Caco-2 (cell line): ENCODE measurements at regions of chr2 and their contacts with region 1.

Region 1: DNA sequence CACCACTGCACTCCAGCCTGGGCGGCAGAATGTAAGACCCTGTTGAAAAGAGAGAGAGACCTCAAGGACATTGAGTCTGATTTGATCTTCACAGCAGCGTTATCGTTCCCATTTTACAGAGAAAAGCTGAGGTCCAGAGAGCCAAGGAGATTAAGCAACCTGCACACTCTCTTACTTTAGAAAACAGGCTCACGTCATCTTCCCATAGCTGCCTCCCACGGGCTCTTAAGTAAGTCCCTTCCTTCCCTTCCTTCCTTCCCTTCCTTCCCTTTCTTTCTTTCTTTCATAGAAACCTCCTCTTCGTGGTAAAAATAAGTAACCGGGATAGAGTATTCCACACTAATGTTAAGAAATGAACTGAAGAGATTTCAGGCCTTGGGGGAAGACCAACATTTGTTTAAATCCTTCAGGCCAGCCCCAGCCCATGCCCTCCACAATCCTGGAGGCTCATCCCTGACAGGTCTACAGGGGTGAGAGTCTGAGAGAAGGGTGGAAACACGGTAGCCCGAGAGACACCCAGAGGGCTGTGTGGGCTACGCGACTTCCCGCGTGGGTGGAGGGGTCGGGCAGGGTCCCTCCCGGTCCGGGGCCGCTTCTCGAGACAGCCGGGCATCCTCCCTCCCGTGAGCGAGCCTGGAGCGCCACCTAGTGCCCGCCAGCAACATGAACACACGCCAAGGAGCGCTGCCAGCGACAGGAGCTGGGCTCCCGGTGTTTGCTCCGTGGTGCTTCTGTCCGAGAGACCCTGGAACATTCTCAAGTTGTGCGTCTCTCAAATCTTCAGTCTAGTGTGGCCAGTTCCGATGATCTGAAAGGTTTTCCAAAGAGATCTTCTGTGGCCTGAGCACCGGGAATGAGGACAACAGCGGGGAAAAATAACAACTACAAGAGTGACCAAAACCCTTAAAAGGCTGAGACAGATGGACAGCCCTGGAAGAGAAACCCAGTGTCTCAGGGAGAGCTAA is 160.3 kb downstream of the INO80D start:
- DNase-seq: peak; percentile 77 to 88
- H3K4me3 ChIP-seq: peak overlapping the region; percentile 22
- H3K4me3 Mint-ChIP-seq: peak overlapping the region; percentile 17
- H3K27ac Mint-ChIP-seq: no peak overlapping the region
- H3K4me1 ChIP-seq: peaks cover 21% of the 10 kb centered on the region
- H3K4me1 Mint-ChIP-seq: peaks cover 21% of the 10 kb centered on the region
- H3K27me3 ChIP-seq: no peaks in the 10 kb centered on the region
- H3K27me3 Mint-ChIP-seq: no peaks in the 10 kb centered on the region
- CTCF ChIP-seq: peak; percentile 95

Region 2: DNA sequence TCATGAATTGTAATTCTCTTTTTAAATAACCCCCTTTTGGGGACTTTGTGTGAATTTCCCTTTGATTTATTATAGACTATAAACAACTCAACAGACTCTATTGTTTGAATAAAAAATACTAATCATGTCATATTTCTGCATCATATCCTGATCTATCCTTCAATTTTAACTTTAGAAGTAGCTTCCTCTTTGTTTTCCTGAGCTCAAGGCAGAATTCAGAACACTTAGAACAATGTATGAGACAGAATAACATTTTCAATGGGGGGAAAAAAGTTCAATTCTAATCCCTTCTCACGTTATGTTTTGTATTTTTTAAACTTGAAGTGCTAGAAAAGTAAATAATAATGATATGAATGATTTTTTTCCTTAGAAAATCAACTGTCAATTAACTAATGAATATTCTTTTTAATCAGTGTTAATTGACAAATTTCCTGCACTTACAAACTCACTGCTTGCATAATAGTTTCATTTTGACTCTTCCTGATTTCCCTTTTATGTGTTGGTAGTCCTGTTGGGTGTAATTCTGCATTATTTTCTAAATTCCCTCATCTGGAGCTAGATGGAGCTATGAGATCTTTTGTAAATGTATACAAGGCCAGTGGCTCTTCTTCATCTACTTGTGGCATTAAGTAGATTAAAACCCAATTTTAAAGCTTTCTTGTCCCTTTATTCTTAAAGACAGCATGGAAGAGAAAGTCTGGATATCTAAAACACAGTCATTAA is 1054.3 kb before region 1 on chr2:
- CTCF ChIA-PET with region 1: no interaction called
- POLR2A ChIA-PET with region 1: no interaction called
- intact Hi-C with region 1: loop called (anchors 5 kb)
- DNase-seq: peak in 1 of 2 experiments; percentile 16
- H3K4me3 ChIP-seq: no peak overlapping the region
- H3K4me3 Mint-ChIP-seq: no peak overlapping the region
- H3K27ac Mint-ChIP-seq: no peak overlapping the region
- H3K4me1 ChIP-seq: no peaks in the 10 kb centered on the region
- H3K4me1 Mint-ChIP-seq: peaks cover 20% of the 10 kb centered on the region
- H3K27me3 ChIP-seq: no peaks in the 10 kb centered on the region
- H3K27me3 Mint-ChIP-seq: no peaks in the 10 kb centered on the region
- CTCF ChIP-seq: peak; percentile 32 to 44

Region 3: DNA sequence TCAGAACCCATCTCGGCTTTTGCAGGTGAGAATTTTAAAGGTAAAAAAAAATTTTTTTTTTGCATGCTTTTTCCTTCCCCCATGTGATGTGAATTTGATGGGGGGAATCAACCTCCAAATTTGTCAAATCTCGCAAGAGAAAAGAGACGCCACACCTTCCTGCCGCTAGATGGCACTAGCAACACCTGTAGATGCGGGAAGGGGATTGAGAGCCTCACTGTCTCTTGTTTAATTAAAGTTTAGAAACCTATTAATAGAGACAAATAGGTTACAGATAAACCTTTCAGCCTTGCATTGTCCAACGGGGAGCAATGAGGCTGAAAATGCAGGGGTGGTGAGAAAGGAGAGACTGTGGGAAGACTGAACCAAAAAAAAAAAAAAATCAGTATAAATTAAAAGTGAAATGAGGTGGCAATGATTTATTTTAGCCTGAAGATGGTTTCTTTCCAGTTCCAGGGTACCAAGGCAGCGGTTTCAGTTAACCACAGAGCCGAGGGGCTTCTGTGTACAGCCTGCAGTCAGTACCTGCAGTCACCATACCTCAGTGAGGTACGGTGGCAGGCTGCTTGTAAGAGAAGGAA is 158.8 kb before region 1 on chr2:
- CTCF ChIA-PET with region 1: interaction called, 4 read pairs
- POLR2A ChIA-PET with region 1: no interaction called
- intact Hi-C with region 1: loop called (anchors 1 kb)
- DNase-seq: peak; percentile 61 to 65
- H3K4me3 ChIP-seq: no peak overlapping the region
- H3K4me3 Mint-ChIP-seq: no peak overlapping the region
- H3K27ac Mint-ChIP-seq: peak overlapping the region; percentile 52
- H3K4me1 ChIP-seq: peaks cover 32% of the 10 kb centered on the region
- H3K4me1 Mint-ChIP-seq: peaks cover 31% of the 10 kb centered on the region
- H3K27me3 ChIP-seq: no peaks in the 10 kb centered on the region
- H3K27me3 Mint-ChIP-seq: no peaks in the 10 kb centered on the region
- CTCF ChIP-seq: peak; percentile 93 to 96

Region 4: DNA sequence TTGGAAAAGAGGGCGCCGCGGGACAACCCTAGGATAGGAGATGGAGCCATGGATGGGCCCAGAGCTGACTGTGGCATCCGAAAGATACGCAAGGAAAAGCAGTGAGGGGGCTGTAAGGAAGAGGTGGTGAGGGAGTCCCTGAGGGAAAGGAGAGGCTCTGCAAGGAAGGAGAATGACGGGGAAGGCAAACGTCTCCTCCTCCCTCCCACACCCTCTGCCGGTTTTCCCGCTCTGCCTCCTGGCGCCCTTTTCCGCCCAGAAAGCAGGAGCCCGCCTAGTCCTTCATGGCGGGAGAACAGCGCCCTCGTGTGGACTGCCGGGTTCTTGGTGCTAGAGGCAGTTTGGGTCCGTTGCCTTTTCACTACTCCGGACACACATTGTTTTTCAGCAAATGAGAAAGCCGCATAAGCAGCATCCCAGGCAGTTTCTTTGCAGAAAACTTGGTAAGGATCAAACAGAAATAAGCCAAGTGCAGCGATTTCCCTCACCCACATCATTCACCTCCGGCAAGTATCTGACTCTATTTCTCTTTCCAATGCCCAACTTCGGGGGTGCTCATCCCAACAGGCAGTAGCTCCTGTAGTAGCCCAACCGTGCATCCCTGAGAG is 40.1 kb before region 1 on chr2:
- CTCF ChIA-PET with region 1: no interaction called
- POLR2A ChIA-PET with region 1: no interaction called
- intact Hi-C with region 1: loop called (anchors 1 kb)
- DNase-seq: peak; percentile 81 to 86
- H3K4me3 ChIP-seq: no peak overlapping the region
- H3K4me3 Mint-ChIP-seq: no peak overlapping the region
- H3K27ac Mint-ChIP-seq: no peak overlapping the region
- H3K4me1 ChIP-seq: no peaks in the 10 kb centered on the region
- H3K4me1 Mint-ChIP-seq: no peaks in the 10 kb centered on the region
- H3K27me3 ChIP-seq: no peaks in the 10 kb centered on the region
- H3K27me3 Mint-ChIP-seq: peaks cover 3% of the 10 kb centered on the region
- CTCF ChIP-seq: peak; percentile 77 to 90

Region 5: GRCh38 chr2:205947621-205948495 is 22.2 kb after region 1 on chr2:
- CTCF ChIA-PET with region 1: interaction called, 21 read pairs
- POLR2A ChIA-PET with region 1: no interaction called
- intact Hi-C with region 1: loop called (anchors 1 kb)
- DNase-seq: peak; percentile 69 to 79
- H3K4me3 ChIP-seq: no peak overlapping the region
- H3K4me3 Mint-ChIP-seq: no peak overlapping the region
- H3K27ac Mint-ChIP-seq: no peak overlapping the region
- H3K4me1 ChIP-seq: peaks cover 32% of the 10 kb centered on the region
- H3K4me1 Mint-ChIP-seq: peaks cover 9% of the 10 kb centered on the region
- H3K27me3 ChIP-seq: no peaks in the 10 kb centered on the region
- H3K27me3 Mint-ChIP-seq: no peaks in the 10 kb centered on the region
- CTCF ChIP-seq: peak; percentile 90 to 93